Activated T-helper 1 cell treated with anti-CD3 and anti-CD28 coated beads, Interleukin-12 subunit alpha, Interleukin-12 subunit beta, Interleukin-2, Interleukin-4 antibody, amounts not matched to agents 30 ng/mL and 10 ng/mL and 1 ng/mL, durations not matched to agents 14 hours and 24 hours and 36 hours (primary cell): ENCODE measurements at regions of chr5 and their contacts with region 1.

Region 1: GRCh38 chr5:81819556-81820317 is 68.8 kb upstream of the SSBP2 start:
- DNase-seq: no peak
- H3K4me3 Mint-ChIP-seq: no peak overlapping the region
- H3K27ac Mint-ChIP-seq: no peak overlapping the region
- H3K4me1 Mint-ChIP-seq: peaks cover 42% of the 10 kb centered on the region
- H3K27me3 Mint-ChIP-seq: peaks cover 2% of the 10 kb centered on the region

Region 2: GRCh38 chr5:81779125-81779915 is 40.4 kb before region 1 on chr5:
- intact Hi-C with region 1: loop called (anchors 5 kb)
- DNase-seq: peak; percentile 16
- H3K4me3 Mint-ChIP-seq: peak overlapping the region; percentile 78
- H3K27ac Mint-ChIP-seq: peak overlapping the region; percentile 63
- H3K4me1 Mint-ChIP-seq: peaks cover 27% of the 10 kb centered on the region
- H3K27me3 Mint-ChIP-seq: peaks cover 2% of the 10 kb centered on the region